ENCODE measurements at regions of chr11 and their contacts with region 1.

Region 1: GRCh38 chr11:74492974-74493790 is at the start of gene LIPT2:
- DNase-seq: peak; percentile 99
- H3K4me3 Mint-ChIP-seq: peak within 1 kb of the TSS; percentile 83
- H3K27ac Mint-ChIP-seq: peak within 1 kb of the TSS; percentile 95
- H3K4me1 Mint-ChIP-seq: peaks cover 17% of the 10 kb centered on the region
- H3K27me3 Mint-ChIP-seq: no peaks in the 10 kb centered on the region
- total RNA-seq, gene LIPT2: 3.1 to 5.6 TPM

Region 2: DNA sequence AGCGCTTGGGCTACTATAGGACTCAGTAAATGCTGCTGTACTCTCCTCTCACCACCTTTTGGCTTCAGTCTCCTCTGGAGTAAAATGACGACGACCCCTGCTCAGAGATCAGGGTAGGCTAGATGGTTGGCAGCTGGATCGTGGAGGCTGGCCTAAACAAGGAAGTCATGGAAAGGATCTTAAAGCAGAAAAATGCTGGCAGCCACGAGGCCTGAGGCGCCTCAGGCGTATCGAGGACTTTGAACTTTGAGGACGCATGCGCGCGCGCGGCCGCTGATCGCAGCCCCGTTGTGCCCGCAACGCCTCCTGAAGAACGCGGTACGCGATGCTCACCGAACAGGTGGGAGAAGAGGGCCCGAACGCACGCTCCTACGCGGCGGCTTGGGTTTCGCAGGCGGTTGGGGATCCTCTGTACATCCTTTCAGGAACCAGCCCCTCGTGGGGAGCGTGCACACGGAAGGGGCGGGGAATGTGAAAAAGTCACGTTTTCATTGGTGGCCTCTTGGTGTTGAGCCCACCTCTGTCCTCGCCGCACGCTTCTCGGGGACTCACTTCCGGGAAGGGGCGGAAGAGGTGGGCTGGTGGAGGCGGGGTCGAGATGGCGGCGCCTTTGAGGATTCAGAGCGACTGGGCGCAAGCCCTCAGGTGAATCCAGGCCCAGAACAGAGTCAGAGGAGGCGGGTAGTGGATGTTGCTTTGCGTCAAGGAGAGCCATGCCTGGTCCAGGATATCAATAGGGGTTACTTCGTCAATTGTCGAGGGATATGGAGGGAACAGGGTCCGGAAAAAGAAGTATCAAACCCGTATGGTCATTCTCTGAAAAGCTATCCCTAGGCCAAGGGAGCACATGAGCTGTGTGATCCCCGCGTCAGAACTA is 616.5 kb before region 1 on chr11 and contains the starts of genes COA4 and PAAF1:
- CTCF ChIA-PET with region 1: no interaction called
- intact Hi-C with region 1: loop called (anchors 1 kb)
- DNase-seq: peak; percentile 97
- H3K4me3 Mint-ChIP-seq: peak within 1 kb of the TSS; percentile 95
- H3K27ac Mint-ChIP-seq: peak within 1 kb of the TSS; percentile 92
- H3K4me1 Mint-ChIP-seq: peaks cover 42% of the 10 kb centered on the region
- H3K27me3 Mint-ChIP-seq: no peaks in the 10 kb centered on the region
- total RNA-seq, gene COA4: 87.8 to 94.2 TPM
- total RNA-seq, gene PAAF1: 29.7 to 30.4 TPM

Region 3: DNA sequence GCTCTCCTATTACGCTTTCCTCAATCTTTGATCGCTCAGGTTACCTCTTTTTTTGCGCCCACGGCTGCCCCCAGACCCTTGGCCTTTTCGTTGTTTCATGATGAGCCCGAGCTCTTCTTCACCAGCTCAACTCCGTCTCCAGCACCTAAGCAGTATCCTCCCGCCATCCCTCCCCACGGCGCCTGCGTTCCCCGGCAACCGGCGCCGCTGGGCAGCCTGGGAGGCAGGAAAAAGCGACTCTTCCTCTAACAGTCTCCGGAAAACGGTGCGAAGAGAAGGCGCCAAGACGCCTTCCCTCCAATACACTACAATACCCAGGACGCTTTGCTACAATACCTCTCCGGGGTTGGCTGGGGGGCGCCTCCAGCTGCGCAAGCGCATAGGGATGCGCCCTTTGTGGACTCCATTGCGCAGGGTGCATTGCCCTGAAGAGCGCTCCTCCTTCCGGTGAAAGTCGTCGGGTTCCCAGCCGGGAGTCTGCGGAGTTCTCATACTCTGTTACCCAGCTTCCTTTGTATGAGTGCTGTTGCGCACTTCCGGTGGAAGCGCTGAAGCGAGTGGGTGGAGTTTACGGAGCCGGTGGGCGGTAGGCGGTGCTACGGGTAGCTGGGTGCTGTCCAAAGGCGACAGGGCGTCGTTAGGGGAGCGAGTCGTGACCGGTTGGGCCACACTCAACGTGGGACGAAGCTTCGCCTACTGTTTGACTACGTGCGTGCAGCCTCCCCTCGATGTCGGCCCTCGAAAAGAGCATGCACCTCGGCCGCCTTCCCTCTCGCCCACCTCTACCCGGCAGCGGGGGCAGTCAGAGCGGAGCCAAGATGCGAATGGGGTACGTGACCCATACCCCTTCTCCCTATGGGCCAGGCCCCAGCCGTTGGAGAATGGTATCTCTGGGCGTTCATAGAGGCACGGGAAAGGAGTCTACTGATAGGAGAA is 322.2 kb before region 1 on chr11 and contains the starts of genes C2CD3 and PPME1:
- CTCF ChIA-PET with region 1: no interaction called
- intact Hi-C with region 1: loop called (anchors 1 kb)
- DNase-seq: peak; percentile 99
- H3K4me3 Mint-ChIP-seq: no peak within 1 kb of the TSS
- H3K27ac Mint-ChIP-seq: no peak within 1 kb of the TSS
- H3K4me1 Mint-ChIP-seq: peaks cover 17% of the 10 kb centered on the region
- H3K27me3 Mint-ChIP-seq: no peaks in the 10 kb centered on the region
- total RNA-seq, gene C2CD3: 21.3 to 23.1 TPM
- total RNA-seq, gene PPME1: 19.0 to 22.1 TPM

Region 4: GRCh38 chr11:74506823-74507222 is 13.6 kb after region 1 on chr11:
- CTCF ChIA-PET with region 1: no interaction called
- intact Hi-C with region 1: no loop called
- DNase-seq: no peak
- H3K4me3 Mint-ChIP-seq: no peak overlapping the region
- H3K27ac Mint-ChIP-seq: no peak overlapping the region
- H3K4me1 Mint-ChIP-seq: no peaks in the 10 kb centered on the region
- H3K27me3 Mint-ChIP-seq: peaks cover 2% of the 10 kb centered on the region

Region 5: DNA sequence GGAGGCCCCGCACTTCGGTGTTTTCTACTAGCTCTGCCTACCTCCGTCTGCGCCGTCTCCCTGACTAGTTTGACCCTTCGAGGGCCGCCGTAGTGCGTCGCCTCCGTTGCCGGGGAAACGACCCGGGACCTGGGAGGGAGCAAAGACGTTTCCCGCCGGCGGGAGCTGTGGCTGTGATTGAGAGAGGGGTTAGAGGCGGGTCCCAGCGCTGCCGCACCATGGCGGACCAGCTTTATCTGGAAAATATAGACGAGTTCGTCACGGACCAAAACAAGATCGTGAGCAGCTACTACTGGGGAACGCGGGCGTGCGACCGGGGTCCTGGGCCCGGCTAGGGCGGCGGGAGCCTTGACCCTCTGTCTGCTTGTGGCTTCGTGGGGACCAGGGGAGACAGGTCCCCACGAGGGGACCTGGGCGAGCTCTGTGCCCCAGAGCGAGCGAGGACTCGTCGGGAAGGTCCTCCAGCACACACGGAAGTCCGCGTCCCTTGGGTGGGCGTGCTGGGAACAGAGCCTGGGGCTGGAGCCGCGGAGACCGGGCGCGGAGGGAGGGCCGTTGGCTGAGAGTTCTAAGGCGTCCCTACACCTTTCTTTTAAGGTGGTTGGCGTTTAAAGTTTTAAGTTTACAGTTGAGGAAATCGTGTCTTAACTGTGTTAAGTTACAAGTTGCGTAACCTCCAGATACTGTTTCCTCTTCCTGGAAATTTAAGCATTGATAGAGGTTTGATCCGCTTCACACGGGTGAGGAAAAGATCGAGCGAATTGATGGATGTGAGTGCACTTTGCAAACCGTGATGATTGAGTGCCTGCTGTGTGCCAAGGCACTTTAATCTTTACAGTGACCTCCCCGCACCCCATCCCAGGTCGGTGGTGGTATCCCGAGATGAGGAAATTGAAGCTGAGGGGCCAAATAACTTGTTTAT is 99.5 kb after region 1 on chr11 and contains the start of gene POLD3:
- CTCF ChIA-PET with region 1: no interaction called
- intact Hi-C with region 1: loop called (anchors 1 kb)
- DNase-seq: peak; percentile 98
- H3K4me3 Mint-ChIP-seq: peak within 1 kb of the TSS; percentile 89
- H3K27ac Mint-ChIP-seq: peak within 1 kb of the TSS; percentile 98
- H3K4me1 Mint-ChIP-seq: peaks cover 28% of the 10 kb centered on the region
- H3K27me3 Mint-ChIP-seq: no peaks in the 10 kb centered on the region
- total RNA-seq, gene POLD3: 84.8 to 91.9 TPM

Region 6: GRCh38 chr11:74948898-74949747 is 455.9 kb after region 1 on chr11 and contains the starts of genes SPCS2 and XRRA1:
- CTCF ChIA-PET with region 1: no interaction called
- intact Hi-C with region 1: loop called (anchors 2 kb)
- DNase-seq: peak; percentile 100
- H3K4me3 Mint-ChIP-seq: peak within 1 kb of the TSS; percentile 98
- H3K27ac Mint-ChIP-seq: peak within 1 kb of the TSS; percentile 89
- H3K4me1 Mint-ChIP-seq: peaks cover 36% of the 10 kb centered on the region
- H3K27me3 Mint-ChIP-seq: no peaks in the 10 kb centered on the region
- total RNA-seq, gene SPCS2: 77.6 to 83.3 TPM
- total RNA-seq, gene XRRA1: 5.0 to 9.5 TPM